Mammary epithelial cell (primary cell): ENCODE measurements at regions of chr1 and their contacts with region 1.

Region 1: DNA sequence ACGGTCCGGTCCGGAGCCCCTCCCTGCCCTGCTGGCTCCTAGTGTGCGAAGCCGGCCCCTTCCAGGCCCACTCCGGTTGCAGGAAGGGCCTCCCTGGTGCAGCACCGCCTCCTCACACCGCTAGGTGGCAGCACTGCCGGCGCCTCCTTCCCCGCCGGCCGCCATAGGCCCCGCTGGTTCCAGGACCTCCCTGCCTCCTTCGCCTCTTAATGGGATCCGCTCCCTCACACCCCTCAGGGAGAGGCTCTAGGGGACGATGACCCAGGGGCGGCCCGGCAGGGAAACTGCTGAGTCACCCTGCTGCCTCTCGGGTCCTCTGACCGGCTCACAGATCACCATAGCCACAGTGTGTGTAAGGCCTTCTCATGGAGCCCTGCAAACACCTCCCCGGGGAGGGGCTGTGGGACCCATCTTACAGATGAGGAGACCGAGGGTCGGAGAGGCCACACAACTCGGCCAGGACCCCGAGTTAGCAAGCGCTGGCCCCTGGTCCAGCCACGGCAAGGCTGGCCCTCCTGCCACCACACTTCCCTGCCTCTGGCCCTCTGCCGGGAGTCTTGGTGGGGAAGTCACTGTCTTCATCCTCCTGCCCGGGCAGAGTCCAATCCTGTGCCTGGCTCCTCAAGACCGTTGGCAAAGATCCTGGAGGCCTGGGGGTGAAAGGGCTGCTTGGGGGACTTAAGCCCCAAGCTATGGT is 1.6 kb upstream of the AJAP1 start:
- DNase-seq: peak; percentile 4
- H3K4me3 ChIP-seq: no peak overlapping the region
- H3K27ac ChIP-seq: no peak overlapping the region
- H3K4me1 ChIP-seq: peaks cover 40% of the 10 kb centered on the region
- H3K27me3 ChIP-seq: no peaks in the 10 kb centered on the region
- CTCF ChIP-seq: peak; percentile 74 to 90

Region 2: GRCh38 chr1:3856908-3857790 is 795.6 kb before region 1 on chr1 and contains the starts of genes CEP104 and DFFB:
- CTCF ChIA-PET with region 1: no interaction called
- dilution Hi-C with region 1: no loop called
- in situ Hi-C with region 1: no loop called
- intact Hi-C with region 1: loop called (anchors 1 kb)
- DNase-seq: peak; percentile 99
- H3K4me3 ChIP-seq: peak within 1 kb of the TSS; percentile 74 to 95 (median 87)
- H3K27ac ChIP-seq: peak within 1 kb of the TSS; percentile 41
- H3K4me1 ChIP-seq: peaks cover 21% of the 10 kb centered on the region
- H3K27me3 ChIP-seq: no peaks in the 10 kb centered on the region
- CTCF ChIP-seq: peak; percentile 12 to 65
- total RNA-seq, gene CEP104: 39.2 to 76.6 TPM
- total RNA-seq, gene DFFB: 3.3 to 4.8 TPM

Region 3: DNA sequence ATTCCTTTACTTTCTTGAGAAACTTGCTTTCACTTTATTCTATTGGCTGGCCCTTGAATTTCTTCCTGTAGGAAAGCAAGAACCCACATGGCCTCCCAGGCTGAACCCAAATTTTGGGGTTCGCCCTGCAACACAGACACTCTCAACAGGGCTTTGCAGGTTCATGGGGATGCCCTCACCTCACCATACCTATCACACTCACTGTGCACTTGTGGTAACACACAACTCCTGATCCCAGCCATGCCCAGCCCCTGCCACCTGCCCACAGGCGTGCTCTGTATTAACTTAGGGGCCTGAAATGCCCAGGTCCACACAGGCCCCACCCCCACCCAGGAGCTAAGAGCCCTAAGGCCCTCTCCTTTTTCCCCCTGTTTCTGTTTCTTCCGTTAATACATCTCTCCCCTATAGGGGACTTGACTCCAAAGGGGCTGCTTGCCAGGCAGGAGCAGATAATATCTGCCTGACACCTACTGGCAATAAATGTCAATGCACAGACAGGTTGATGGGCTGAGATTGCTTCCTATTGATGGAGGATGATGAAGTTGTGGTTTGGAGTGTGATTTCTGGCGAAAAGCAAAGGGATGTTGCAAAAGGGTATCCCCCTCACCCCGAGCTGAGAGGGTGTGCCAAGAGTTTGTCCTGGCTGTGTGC is 173.1 kb after region 1 on chr1:
- CTCF ChIA-PET with region 1: no interaction called
- dilution Hi-C with region 1: no loop called
- in situ Hi-C with region 1: loop called in 1 of 2 experiments (anchors 10 kb)
- intact Hi-C with region 1: loop called (anchors 1 kb)
- DNase-seq: no peak
- H3K4me3 ChIP-seq: no peak overlapping the region
- H3K27ac ChIP-seq: no peak overlapping the region
- H3K4me1 ChIP-seq: no peaks in the 10 kb centered on the region
- H3K27me3 ChIP-seq: no peaks in the 10 kb centered on the region
- CTCF ChIP-seq: peak; percentile 42 to 65

Region 4: DNA sequence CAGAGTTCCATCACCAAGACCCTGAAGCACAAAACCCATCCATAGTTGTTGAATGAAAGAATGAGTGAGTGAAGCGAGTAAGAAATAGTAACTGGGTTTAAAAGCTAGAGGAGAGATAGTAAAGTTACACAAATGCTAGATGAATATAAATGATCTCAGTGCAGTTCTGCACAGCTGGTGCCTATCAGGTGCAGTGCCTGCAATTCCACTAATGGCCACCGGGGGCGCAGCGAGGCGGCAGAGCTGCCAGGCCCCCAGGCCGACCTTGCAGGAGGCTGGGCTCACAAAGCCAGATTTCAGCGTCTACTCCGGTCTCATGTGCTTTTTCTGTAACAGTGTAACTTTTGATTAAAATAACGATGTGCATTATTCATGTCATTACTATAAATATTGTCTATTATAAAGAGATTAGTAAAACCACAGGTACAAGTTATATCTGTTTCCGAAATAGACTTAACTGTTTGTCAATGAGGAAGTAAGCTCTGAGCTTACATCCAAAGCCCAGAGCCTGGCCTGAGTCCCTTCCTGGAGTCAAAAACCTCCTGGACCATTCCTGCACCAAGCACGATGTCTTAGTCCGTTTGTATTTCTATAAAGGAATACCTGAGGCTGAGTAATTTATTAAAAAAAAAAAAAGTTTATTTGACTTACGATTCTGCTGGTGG is 861.9 kb after region 1 on chr1:
- CTCF ChIA-PET with region 1: interaction called, 3 read pairs
- dilution Hi-C with region 1: no loop called
- in situ Hi-C with region 1: no loop called
- intact Hi-C with region 1: loop called (anchors 1 kb)
- DNase-seq: peak; percentile 6
- H3K4me3 ChIP-seq: no peak overlapping the region
- H3K27ac ChIP-seq: no peak overlapping the region
- H3K4me1 ChIP-seq: no peaks in the 10 kb centered on the region
- H3K27me3 ChIP-seq: no peaks in the 10 kb centered on the region
- CTCF ChIP-seq: peak; percentile 97 to 98

Region 5: GRCh38 chr1:5651964-5652821 is 999.4 kb after region 1 on chr1:
- CTCF ChIA-PET with region 1: no interaction called
- dilution Hi-C with region 1: no loop called
- in situ Hi-C with region 1: no loop called
- intact Hi-C with region 1: loop called (anchors 5 kb)
- DNase-seq: peak; percentile 77
- H3K4me3 ChIP-seq: no peak overlapping the region
- H3K27ac ChIP-seq: no peak overlapping the region
- H3K4me1 ChIP-seq: peaks cover 18% of the 10 kb centered on the region
- H3K27me3 ChIP-seq: no peaks in the 10 kb centered on the region
- CTCF ChIP-seq: no peak

Region 6: GRCh38 chr1:5915587-5916571 is 1263.1 kb after region 1 on chr1:
- CTCF ChIA-PET with region 1: no interaction called
- dilution Hi-C with region 1: no loop called
- in situ Hi-C with region 1: no loop called
- intact Hi-C with region 1: loop called (anchors 1 kb)
- DNase-seq: peak; percentile 58
- H3K4me3 ChIP-seq: no peak overlapping the region
- H3K27ac ChIP-seq: no peak overlapping the region
- H3K4me1 ChIP-seq: peaks cover 8% of the 10 kb centered on the region
- H3K27me3 ChIP-seq: no peaks in the 10 kb centered on the region
- CTCF ChIP-seq: peak; percentile 73 to 77